CD4-positive, alpha-beta memory T cell (primary cell): ENCODE measurements at regions of chr9 and their contacts with region 1.

Region 1: DNA sequence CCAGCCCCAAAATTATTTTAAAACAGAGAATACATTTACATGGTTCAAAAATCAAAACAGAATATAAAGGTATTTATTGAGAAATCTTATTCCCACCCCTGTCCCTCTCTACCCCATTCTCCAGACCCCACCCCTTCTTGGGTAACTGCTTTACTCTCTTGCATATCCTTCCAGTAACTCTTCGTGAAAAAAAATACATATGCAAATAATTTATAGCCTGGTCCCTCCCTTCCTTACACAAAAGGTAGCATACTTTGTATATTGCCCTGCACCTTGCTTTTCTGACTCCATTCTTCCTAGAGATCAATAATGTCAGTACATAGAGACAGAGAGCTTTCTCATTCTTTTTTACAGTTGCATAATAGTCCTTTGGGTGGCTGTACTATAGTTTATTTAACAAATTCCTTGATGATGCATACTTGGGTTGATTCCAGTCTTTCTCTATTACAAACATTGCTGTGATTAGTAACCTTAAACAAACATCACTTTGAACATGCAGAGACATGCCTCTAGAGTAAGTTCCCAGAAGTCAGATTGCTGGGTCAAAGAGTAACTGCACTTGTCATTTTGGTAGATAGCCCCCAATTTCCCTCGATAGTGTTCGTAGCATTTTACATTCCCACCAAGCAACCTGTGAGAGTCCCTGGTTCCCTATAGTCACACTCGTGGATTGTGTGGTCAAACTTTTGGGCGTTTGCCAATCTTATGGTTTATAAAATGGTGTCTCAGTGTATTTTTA is 47.8 kb downstream of the STOM start:
- DNase-seq: no peak
- H3K4me3 ChIP-seq: no peak overlapping the region
- H3K4me3 Mint-ChIP-seq: peak overlapping the region in 1 of 8 donors; percentile 24
- H3K27ac ChIP-seq: no peak overlapping the region
- H3K27ac Mint-ChIP-seq: peak overlapping the region in 1 of 7 donors; percentile 47
- H3K4me1 ChIP-seq: peaks cover 24% of the 10 kb centered on the region
- H3K4me1 Mint-ChIP-seq: peaks cover 14 to 29% (median 20%) of the 10 kb centered on the region in 4 donors
- H3K27me3 ChIP-seq: no peaks in the 10 kb centered on the region
- H3K27me3 Mint-ChIP-seq: no peaks in the 10 kb centered on the region

Region 2: GRCh38 chr9:121213136-121213806 is 108.9 kb before region 1 on chr9:
- CTCF ChIA-PET with region 1: interaction called, 20 read pairs
- POLR2A ChIA-PET with region 1: no interaction called
- intact Hi-C with region 1: loop called (anchors 1 kb)
- DNase-seq: peak; percentile 40 to 66 (median 49)
- H3K4me3 ChIP-seq: no peak overlapping the region
- H3K4me3 Mint-ChIP-seq: no peak overlapping the region
- H3K27ac ChIP-seq: no peak overlapping the region
- H3K27ac Mint-ChIP-seq: peak overlapping the region in 1 of 7 donors; percentile 47
- H3K4me1 ChIP-seq: peaks cover 5% of the 10 kb centered on the region
- H3K4me1 Mint-ChIP-seq: peaks cover 0 to 7% (median 3%) of the 10 kb centered on the region in 4 donors
- H3K27me3 ChIP-seq: no peaks in the 10 kb centered on the region
- H3K27me3 Mint-ChIP-seq: no peaks in the 10 kb centered on the region

Region 3: DNA sequence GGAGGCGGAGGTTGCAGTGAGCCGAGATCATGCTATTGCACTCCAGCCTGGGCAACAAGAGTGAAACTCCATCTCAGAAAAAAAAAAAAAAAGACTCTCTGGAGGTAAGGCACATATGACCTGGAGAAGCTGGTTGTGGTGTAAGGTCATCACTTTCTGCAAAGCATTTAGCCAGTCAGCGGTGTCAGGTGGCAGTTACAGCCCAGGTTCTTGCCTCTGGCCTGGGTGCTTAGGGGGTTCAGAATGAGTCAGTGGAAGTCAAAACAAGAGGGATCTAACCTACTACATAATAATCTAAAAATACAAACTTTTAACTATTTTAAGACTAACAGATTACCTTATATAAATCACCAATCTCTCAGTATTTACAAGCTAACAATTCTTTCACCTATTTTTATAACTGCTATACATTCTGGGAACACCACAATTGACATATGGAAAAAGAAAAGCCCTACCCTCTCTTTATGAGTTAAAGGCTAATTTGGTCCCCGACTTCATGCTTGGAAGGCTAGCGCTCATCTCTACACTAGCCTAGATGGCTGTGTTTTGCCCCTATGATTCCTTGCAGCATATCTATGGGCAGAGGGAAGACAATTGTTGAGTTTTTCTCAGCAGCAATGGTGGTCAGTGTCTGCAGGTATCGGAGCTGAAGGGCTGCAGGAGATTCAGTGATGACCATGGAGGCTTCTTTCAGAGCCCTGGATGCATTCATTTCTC is 18.6 kb after region 1 on chr9:
- CTCF ChIA-PET with region 1: interaction called, 24 read pairs
- POLR2A ChIA-PET with region 1: interaction called, 3 read pairs
- intact Hi-C with region 1: no loop called
- DNase-seq: no peak
- H3K4me3 ChIP-seq: no peak overlapping the region
- H3K4me3 Mint-ChIP-seq: no peak overlapping the region
- H3K27ac ChIP-seq: no peak overlapping the region
- H3K27ac Mint-ChIP-seq: peak overlapping the region in 2 of 7 donors; percentile 39 to 66
- H3K4me1 ChIP-seq: no peaks in the 10 kb centered on the region
- H3K4me1 Mint-ChIP-seq: peaks cover 8 to 25% (median 18%) of the 10 kb centered on the region in 4 donors
- H3K27me3 ChIP-seq: no peaks in the 10 kb centered on the region
- H3K27me3 Mint-ChIP-seq: no peaks in the 10 kb centered on the region

Region 4: GRCh38 chr9:121369595-121370265 is 47.5 kb after region 1 on chr9 and contains the start of gene STOM:
- CTCF ChIA-PET with region 1: interaction called, 272 read pairs
- POLR2A ChIA-PET with region 1: interaction called, 5 read pairs
- intact Hi-C with region 1: no loop called
- DNase-seq: peak in 4 of 5 donors; percentile 75 to 86 (median 78)
- H3K4me3 ChIP-seq: peak within 1 kb of the TSS; percentile 72 to 80
- H3K4me3 Mint-ChIP-seq: peak within 1 kb of the TSS; percentile 89 to 98 (median 96)
- H3K27ac ChIP-seq: peak within 1 kb of the TSS; percentile 79
- H3K27ac Mint-ChIP-seq: peak within 1 kb of the TSS; percentile 78 to 99 (median 96)
- H3K4me1 ChIP-seq: peaks cover 50% of the 10 kb centered on the region
- H3K4me1 Mint-ChIP-seq: peaks cover 38 to 74% (median 50%) of the 10 kb centered on the region in 4 donors
- H3K27me3 ChIP-seq: no peaks in the 10 kb centered on the region
- H3K27me3 Mint-ChIP-seq: no peaks in the 10 kb centered on the region
- total RNA-seq, gene STOM: 81.2 to 82.8 TPM

Region 5: GRCh38 chr9:121393318-121393717 is 71.1 kb after region 1 on chr9:
- CTCF ChIA-PET with region 1: interaction called, 330 read pairs
- POLR2A ChIA-PET with region 1: interaction called, 11 read pairs
- intact Hi-C with region 1: no loop called
- DNase-seq: no peak
- H3K4me3 ChIP-seq: no peak overlapping the region
- H3K4me3 Mint-ChIP-seq: no peak overlapping the region
- H3K27ac ChIP-seq: no peak overlapping the region
- H3K27ac Mint-ChIP-seq: no peak overlapping the region
- H3K4me1 ChIP-seq: peaks cover 5% of the 10 kb centered on the region
- H3K4me1 Mint-ChIP-seq: peaks cover 5 to 19% (median 7%) of the 10 kb centered on the region in 4 donors
- H3K27me3 ChIP-seq: no peaks in the 10 kb centered on the region
- H3K27me3 Mint-ChIP-seq: no peaks in the 10 kb centered on the region